Body of pancreas (tissue), 4 donors: ENCODE measurements at regions of chr12 and their contacts with region 1.

Region 1: DNA sequence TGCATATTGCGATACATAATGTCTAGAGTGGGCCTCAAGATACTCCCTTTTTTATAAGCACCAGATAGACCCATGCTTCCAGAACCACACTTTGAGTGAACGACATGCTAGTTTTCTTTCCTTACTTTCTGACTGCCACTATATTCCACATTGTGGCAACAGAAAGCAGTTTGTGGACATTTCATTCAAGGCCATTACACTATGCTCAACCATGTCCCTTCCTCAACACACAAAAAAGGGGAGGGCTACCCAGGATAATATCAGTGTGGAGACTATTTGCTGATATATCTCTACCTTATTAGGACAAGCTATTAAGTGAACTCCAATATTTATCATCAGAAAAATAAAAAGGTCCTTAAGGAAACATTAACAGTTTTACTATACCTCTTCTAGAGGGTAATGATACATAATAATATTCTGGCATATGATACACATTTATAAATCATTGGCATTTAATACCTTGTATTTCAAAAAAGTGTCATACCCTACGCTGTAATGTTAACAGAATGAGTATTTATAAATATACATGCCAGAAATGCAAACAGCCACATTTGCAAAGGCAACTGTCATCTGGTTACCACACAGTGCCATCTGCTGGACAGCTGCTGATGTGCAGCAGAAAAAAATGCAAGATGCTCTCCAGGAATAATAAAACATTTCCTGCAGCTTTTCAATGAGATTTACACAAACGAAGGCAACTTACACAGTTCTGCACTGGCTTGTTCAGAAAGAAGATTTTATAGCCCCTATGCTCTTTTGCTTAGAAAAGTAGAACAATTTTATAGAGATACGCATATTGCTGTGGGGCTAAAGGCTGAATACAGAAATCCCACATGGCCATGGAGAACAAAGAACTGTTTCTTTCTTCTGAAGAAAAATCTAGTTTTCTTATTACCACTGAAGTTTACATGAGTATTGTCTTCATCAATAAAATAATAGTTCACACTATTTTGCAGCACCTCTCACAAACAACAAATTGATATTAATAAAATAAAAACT is 182.2 kb upstream of the GRIP1 start:
- DNase-seq: peak; percentile 45 to 74 (median 58)
- ATAC-seq: peak; percentile 33
- H3K4me3 ChIP-seq: no peak overlapping the region
- H3K27ac ChIP-seq: no peak overlapping the region
- H3K4me1 ChIP-seq: no peaks in the 10 kb centered on the region
- H3K27me3 ChIP-seq: no peaks in the 10 kb centered on the region
- CTCF ChIP-seq: peak; percentile 53 to 86 (median 79)
- POLR2A ChIP-seq: no peak

Region 2: DNA sequence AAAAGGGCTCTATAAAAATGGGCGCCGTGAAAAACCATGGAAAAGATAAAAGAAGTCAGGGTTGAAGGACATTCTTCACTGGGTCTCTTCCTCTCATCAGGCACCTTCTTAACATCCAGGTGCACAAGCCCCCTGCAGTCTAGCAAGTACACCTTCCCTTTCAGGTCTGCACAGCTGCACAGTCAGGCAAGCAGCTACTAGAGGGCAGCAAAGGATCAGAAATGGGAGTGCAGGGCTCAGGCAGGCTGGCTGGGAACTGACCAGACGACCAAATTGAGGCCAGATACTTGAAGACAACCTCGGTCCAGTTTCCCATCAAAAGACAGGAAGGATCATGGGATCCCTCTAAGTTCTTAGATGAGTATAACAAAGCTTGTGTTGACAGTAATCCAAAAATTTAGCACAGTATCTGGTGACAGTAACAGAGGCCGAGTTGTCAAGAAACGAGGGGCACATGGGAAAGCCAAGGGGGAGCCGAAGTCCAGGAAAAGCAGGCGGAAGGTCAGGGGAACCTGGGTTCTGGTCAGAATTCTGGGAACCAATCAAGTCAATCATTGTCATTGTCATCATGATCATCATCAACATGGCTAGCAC is 172.1 kb before region 1 on chr12:
- intact Hi-C with region 1: loop called (anchors 10 kb)
- DNase-seq: peak; percentile 52 to 74 (median 64)
- ATAC-seq: peak; percentile 67
- H3K4me3 ChIP-seq: no peak overlapping the region
- H3K27ac ChIP-seq: no peak overlapping the region
- H3K4me1 ChIP-seq: no peaks in the 10 kb centered on the region
- H3K27me3 ChIP-seq: no peaks in the 10 kb centered on the region
- CTCF ChIP-seq: peak; percentile 34 to 87 (median 63)
- POLR2A ChIP-seq: no peak